Activated T-helper 2 cell treated with anti-CD3 and anti-CD28 coated beads, Interferon-gamma antibody, Interleukin-2, Interleukin-4, amounts not matched to agents 10 μg/mL and 5 μg/mL and 100 μg/mL, durations not matched to agents 14 hours and 24 hours and 36 hours (primary cell): ENCODE measurements at regions of chr9 and their contacts with region 1.

Region 1: GRCh38 chr9:2032234-2032633 is 17.1 kb downstream of the SMARCA2 start:
- DNase-seq: no peak
- H3K4me3 Mint-ChIP-seq: no peak overlapping the region
- H3K27ac Mint-ChIP-seq: peak overlapping the region; percentile 59
- H3K4me1 Mint-ChIP-seq: peaks cover 61% of the 10 kb centered on the region
- H3K27me3 Mint-ChIP-seq: no peaks in the 10 kb centered on the region

Region 2: DNA sequence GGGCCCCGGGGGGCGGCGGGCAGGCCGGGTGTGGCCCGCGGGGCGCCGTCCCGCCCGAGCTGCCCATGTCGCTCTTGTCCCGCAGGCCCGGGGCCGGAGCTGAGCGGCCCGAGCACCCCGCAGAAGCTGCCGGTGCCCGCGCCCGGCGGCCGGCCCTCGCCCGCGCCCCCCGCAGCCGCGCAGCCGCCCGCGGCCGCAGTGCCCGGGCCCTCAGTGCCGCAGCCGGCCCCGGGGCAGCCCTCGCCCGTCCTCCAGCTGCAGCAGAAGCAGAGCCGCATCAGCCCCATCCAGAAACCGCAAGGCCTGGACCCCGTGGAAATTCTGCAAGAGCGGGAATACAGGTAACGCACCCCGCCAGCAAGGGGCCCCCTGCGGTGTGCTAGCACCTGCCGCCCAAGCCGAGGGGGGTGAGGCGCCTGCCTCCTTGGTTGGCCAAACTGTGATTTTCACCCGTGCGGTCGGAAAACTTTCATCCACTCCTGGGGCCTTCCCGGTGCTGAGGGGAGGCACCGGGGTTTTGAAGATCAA is 15.0 kb after region 1 on chr9:
- intact Hi-C with region 1: loop called (anchors 2 kb)
- DNase-seq: no peak
- H3K4me3 Mint-ChIP-seq: no peak overlapping the region
- H3K27ac Mint-ChIP-seq: no peak overlapping the region
- H3K4me1 Mint-ChIP-seq: peaks cover 18% of the 10 kb centered on the region
- H3K27me3 Mint-ChIP-seq: no peaks in the 10 kb centered on the region